ENCODE measurements at regions of chr11 and their contacts with region 1.

Region 1: GRCh38 chr11:75280227-75280701 is 39.7 kb downstream of the TPBGL start:
- ATAC-seq: peak; percentile 85 to 97 (median 88)
- H3K4me3 ChIP-seq: no peak overlapping the region
- H3K27ac ChIP-seq: no peak overlapping the region
- H3K4me1 ChIP-seq: no peaks in the 10 kb centered on the region

Region 2: DNA sequence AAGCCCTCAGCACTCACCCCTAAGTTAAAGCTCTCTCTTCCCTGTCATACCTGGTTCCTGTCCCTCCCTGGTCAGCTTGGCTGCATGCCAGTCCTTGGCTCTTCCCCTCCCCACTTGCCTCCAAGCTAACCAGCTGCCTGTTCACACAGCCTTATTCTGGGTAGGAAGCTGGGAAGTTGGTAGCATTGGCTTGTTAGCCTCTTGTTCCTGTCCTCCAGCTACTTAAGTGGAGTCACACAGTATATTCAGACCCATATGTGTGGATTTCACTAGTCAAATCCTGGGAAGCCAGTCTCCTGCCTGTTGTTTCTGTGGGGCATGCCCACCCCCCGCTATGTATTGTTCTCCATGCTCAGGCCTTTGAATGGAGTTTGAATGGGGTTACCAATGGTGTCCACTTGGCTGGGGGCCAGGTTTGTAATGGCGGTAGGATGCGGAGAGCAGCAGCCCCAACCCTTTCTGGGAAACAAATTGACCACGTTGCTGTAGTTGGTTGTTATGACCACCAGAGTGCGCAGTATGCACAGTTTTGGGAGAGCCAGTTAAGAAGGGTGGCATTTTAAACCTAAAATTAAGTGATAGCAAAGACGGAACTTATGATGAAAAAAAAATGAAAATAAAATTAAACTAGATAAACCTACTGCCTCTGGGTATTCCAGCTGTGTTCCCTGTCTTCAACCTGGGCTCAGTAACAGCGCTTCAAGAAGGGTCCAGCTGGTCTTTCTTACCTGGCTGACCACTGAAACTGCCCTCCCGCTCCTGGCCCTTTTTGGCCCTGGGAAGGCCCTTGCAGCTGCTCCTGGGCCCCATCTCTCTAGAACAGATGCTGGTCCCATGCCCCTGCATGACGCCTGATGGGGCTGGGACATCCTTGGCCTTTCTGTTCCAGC is 108.4 kb after region 1 on chr11:
- in situ Hi-C with region 1: loop called in 8 of 9 experiments (anchors 10 to 25 kb)
- ATAC-seq: peak; percentile 68 to 84 (median 82)
- H3K4me3 ChIP-seq: no peak overlapping the region
- H3K27ac ChIP-seq: no peak overlapping the region
- H3K4me1 ChIP-seq: peaks cover 0 to 7% of the 10 kb centered on the region in 2 donors

Region 3: GRCh38 chr11:75399344-75400145 is 119.3 kb after region 1 on chr11 and contains the start of gene RPS3:
- in situ Hi-C with region 1: loop called in 2 of 9 experiments (anchors 25 kb)
- ATAC-seq: peak; percentile 84 to 99 (median 97)
- H3K4me3 ChIP-seq: peak within 1 kb of the TSS; percentile 50 to 98 (median 90)
- H3K27ac ChIP-seq: peak within 1 kb of the TSS; percentile 87 to 96
- H3K4me1 ChIP-seq: peaks cover 16 to 20% of the 10 kb centered on the region in 2 donors
- total RNA-seq, gene RPS3: 1,093 to 3,288 (median 2,247) TPM

Region 4: DNA sequence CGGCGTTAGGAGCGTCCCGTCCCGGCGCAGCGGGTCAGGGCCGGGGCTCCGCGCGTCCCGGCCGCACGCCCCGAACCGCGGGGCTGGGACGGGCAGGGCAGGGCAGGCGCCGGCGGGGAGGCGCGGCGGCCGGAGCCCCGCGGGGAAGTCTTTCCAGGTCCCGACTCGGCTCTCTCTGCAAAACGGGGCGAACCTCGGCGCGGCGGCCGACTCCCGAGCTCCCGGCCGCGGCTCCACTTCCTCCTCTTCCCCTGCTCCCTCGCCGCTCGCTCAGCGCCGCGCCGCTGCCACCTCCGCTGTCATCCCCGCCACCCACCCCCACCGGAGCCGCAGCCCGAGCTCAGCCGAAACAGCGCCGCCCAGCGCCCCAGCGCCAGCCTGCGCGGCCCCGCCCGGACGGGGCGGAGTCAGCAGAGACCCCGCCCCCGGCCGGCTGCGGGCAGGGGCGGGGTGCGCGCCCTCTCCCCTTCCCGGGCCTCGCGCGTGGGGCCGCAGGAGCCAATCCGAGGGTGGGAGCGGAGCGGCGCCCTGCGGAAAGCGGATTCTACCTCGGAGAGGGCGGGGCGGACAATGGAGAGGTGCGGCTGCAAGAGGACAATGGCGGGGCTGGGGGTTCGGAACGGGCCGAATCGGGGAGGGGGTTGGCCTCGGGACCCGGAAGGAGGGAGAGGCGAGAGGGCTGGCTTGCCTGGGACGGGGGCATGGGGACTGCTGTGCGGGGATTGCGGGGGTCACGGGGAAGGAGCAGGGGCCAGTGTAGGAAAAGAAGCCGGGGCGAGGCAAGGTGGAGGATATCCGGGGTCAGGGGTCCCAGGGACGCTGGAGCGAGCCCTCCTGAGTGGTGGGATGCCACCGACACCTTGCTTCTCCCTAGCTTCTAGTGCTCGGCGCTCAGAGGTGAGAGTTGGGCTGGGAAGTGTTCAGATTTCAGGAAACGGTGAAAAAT is 245.6 kb after region 1 on chr11 and contains the start of gene GDPD5:
- in situ Hi-C with region 1: loop called in 2 of 9 experiments (anchors 25 kb)
- ATAC-seq: peak; percentile 85 to 93 (median 86)
- H3K4me3 ChIP-seq: peak within 1 kb of the TSS; percentile 53 to 91 (median 75)
- H3K27ac ChIP-seq: peak within 1 kb of the TSS; percentile 27 to 28
- H3K4me1 ChIP-seq: peaks cover 11 to 12% of the 10 kb centered on the region in 2 donors
- total RNA-seq, gene GDPD5: 3.2 to 28.2 (median 16.1) TPM